ENCODE measurements at regions of chr19 and their contacts with region 1.

Region 1: DNA sequence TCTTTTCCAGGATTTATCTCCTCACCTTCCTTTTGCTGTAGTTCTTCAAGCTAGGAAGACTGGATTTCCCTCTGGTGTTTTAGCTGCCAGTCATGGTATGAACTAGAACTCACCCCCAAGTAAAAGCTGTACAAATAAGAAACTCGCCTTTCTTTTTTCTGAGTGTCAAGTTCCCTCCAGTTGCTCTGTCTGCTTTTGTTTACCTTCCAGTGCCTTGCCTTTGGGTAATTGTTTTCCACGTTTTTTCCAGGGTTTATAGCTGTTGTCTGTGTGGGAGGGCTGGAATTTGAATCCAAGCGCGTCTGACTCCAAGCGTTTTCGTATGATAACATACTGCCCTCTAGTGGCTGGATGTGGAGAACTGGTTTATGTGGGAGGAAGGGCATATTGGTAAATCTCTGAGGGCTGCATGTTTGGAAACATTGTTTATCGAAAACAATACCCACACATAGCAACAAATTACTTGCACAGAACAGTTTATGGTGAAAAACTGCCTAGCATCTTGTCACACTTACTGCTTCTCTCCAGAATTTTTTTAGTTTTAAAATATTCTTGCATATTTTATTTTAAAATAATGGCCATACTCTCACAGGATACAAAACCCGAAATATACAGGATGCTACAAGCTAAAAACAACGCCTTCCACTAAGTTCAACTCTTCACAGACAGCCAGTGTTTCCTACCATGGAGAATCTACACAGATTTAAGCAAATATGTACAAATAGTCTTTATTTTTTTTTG is 19.2 kb downstream of the RCN3 start:
- DNase-seq: peak; percentile 41 to 76 (median 73)
- H3K4me3 ChIP-seq: peak overlapping the region; percentile 45
- H3K4me3 Mint-ChIP-seq: peak overlapping the region in 6 of 7 donors; percentile 5 to 84 (median 73)
- H3K27ac ChIP-seq: no peak overlapping the region
- H3K27ac Mint-ChIP-seq: peak overlapping the region in 7 of 8 donors; percentile 15 to 85 (median 77)
- H3K4me1 ChIP-seq: peaks cover 52% of the 10 kb centered on the region
- H3K4me1 Mint-ChIP-seq: peaks cover 21 to 30% (median 28%) of the 10 kb centered on the region in 3 donors
- H3K27me3 ChIP-seq: no peaks in the 10 kb centered on the region
- H3K27me3 Mint-ChIP-seq: peaks cover 0 to 1% of the 10 kb centered on the region in 2 donors

Region 2: GRCh38 chr19:49473868-49474544 is 73.0 kb before region 1 on chr19 and contains the start of gene FLT3LG:
- CTCF ChIA-PET with region 1: interaction called, 17 read pairs
- POLR2A ChIA-PET with region 1: interaction called, 3 read pairs
- DNase-seq: peak; percentile 84 to 98 (median 92)
- H3K4me3 ChIP-seq: peak within 1 kb of the TSS; percentile 75
- H3K4me3 Mint-ChIP-seq: peak within 1 kb of the TSS; percentile 90 to 98 (median 95)
- H3K27ac ChIP-seq: peak within 1 kb of the TSS; percentile 74
- H3K27ac Mint-ChIP-seq: peak within 1 kb of the TSS; percentile 95 to 100 (median 98)
- H3K4me1 ChIP-seq: peaks cover 61% of the 10 kb centered on the region
- H3K4me1 Mint-ChIP-seq: peaks cover 44 to 65% (median 48%) of the 10 kb centered on the region in 3 donors
- H3K27me3 ChIP-seq: no peaks in the 10 kb centered on the region
- H3K27me3 Mint-ChIP-seq: peaks cover 0 to 4% of the 10 kb centered on the region in 2 donors
- total RNA-seq, gene FLT3LG: 63.9 to 71.5 TPM

Region 3: DNA sequence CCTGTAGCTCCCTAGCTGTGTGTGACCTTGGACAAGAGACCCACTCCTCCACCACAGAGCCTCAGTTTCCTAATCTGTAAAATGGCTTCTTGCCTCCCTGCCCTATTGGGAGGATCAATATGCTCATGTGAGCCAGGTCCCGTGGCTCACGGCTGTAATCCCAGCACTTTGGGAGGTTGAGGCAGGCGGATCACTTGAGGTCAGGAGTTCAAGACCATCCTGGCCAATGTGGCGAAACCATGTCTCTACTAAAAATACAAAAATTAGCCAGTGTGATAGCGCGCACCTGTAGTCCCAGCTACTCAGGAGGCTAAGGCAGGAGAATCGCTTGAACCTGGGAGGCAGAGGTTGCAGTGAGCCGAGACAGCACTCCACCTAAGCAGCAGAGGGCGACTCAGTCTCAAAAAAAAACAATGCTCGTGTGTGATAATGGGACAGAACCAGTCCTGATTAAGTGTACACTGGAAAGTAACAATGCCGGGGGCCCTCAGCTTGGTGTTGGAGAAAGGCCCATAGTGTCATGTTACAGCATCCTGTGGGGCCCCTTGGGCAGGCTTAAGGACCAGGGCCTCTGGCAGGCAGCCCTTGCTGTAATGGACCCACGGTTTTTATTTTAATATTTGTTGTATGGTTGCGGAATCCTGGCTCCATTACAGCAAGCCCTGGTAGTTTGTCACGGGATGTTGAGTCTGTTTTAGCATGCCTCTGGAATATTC is 44.0 kb before region 1 on chr19:
- CTCF ChIA-PET with region 1: interaction called, 138 read pairs
- POLR2A ChIA-PET with region 1: interaction called, 5 read pairs
- DNase-seq: peak in 3 of 5 donors; percentile 21 to 59 (median 59)
- H3K4me3 ChIP-seq: no peak overlapping the region
- H3K4me3 Mint-ChIP-seq: peak overlapping the region in 6 of 7 donors; percentile 5 to 45 (median 24)
- H3K27ac ChIP-seq: no peak overlapping the region
- H3K27ac Mint-ChIP-seq: peak overlapping the region; percentile 88 to 99 (median 96)
- H3K4me1 ChIP-seq: peaks cover 44% of the 10 kb centered on the region
- H3K4me1 Mint-ChIP-seq: peaks cover 38 to 48% (median 44%) of the 10 kb centered on the region in 3 donors
- H3K27me3 ChIP-seq: no peaks in the 10 kb centered on the region
- H3K27me3 Mint-ChIP-seq: peaks cover 0 to 10% of the 10 kb centered on the region in 2 donors

Region 4: GRCh38 chr19:49512970-49513745 is 33.8 kb before region 1 on chr19:
- CTCF ChIA-PET with region 1: interaction called, 138 read pairs
- POLR2A ChIA-PET with region 1: no interaction called
- DNase-seq: peak in 1 of 5 donors; percentile 31
- H3K4me3 ChIP-seq: peak overlapping the region; percentile 51
- H3K4me3 Mint-ChIP-seq: peak overlapping the region; percentile 80 to 93 (median 84)
- H3K27ac ChIP-seq: no peak overlapping the region
- H3K27ac Mint-ChIP-seq: peak overlapping the region in 6 of 8 donors; percentile 67 to 98 (median 87)
- H3K4me1 ChIP-seq: peaks cover 35% of the 10 kb centered on the region
- H3K4me1 Mint-ChIP-seq: peaks cover 18 to 41% (median 21%) of the 10 kb centered on the region in 3 donors
- H3K27me3 ChIP-seq: no peaks in the 10 kb centered on the region
- H3K27me3 Mint-ChIP-seq: peaks cover 0 to 2% of the 10 kb centered on the region in 2 donors

Region 5: GRCh38 chr19:49533551-49534488 is 13.2 kb before region 1 on chr19:
- CTCF ChIA-PET with region 1: interaction called, 47 read pairs
- POLR2A ChIA-PET with region 1: interaction called, 6 read pairs
- DNase-seq: peak; percentile 83 to 88 (median 84)
- H3K4me3 ChIP-seq: peak overlapping the region; percentile 64
- H3K4me3 Mint-ChIP-seq: peak overlapping the region; percentile 78 to 94 (median 87)
- H3K27ac ChIP-seq: no peak overlapping the region
- H3K27ac Mint-ChIP-seq: peak overlapping the region; percentile 59 to 91 (median 88)
- H3K4me1 ChIP-seq: peaks cover 22% of the 10 kb centered on the region
- H3K4me1 Mint-ChIP-seq: peaks cover 18 to 26% (median 20%) of the 10 kb centered on the region in 3 donors
- H3K27me3 ChIP-seq: no peaks in the 10 kb centered on the region
- H3K27me3 Mint-ChIP-seq: peaks cover 0 to 4% of the 10 kb centered on the region in 2 donors

Region 6: GRCh38 chr19:49580264-49581006 is 33.4 kb after region 1 on chr19 and contains the start of gene NOSIP:
- CTCF ChIA-PET with region 1: interaction called, 16 read pairs
- POLR2A ChIA-PET with region 1: interaction called, 4 read pairs
- DNase-seq: peak; percentile 92 to 97 (median 93)
- H3K4me3 ChIP-seq: peak within 1 kb of the TSS; percentile 93
- H3K4me3 Mint-ChIP-seq: peak within 1 kb of the TSS; percentile 90 to 95 (median 94)
- H3K27ac ChIP-seq: peak within 1 kb of the TSS; percentile 78
- H3K27ac Mint-ChIP-seq: peak within 1 kb of the TSS; percentile 65 to 98 (median 92)
- H3K4me1 ChIP-seq: peaks cover 24% of the 10 kb centered on the region
- H3K4me1 Mint-ChIP-seq: peaks cover 27 to 39% (median 35%) of the 10 kb centered on the region in 3 donors
- H3K27me3 ChIP-seq: no peaks in the 10 kb centered on the region
- H3K27me3 Mint-ChIP-seq: no peaks in the 10 kb centered on the region
- total RNA-seq, gene NOSIP: 62.5 to 64.3 TPM

Region 7: DNA sequence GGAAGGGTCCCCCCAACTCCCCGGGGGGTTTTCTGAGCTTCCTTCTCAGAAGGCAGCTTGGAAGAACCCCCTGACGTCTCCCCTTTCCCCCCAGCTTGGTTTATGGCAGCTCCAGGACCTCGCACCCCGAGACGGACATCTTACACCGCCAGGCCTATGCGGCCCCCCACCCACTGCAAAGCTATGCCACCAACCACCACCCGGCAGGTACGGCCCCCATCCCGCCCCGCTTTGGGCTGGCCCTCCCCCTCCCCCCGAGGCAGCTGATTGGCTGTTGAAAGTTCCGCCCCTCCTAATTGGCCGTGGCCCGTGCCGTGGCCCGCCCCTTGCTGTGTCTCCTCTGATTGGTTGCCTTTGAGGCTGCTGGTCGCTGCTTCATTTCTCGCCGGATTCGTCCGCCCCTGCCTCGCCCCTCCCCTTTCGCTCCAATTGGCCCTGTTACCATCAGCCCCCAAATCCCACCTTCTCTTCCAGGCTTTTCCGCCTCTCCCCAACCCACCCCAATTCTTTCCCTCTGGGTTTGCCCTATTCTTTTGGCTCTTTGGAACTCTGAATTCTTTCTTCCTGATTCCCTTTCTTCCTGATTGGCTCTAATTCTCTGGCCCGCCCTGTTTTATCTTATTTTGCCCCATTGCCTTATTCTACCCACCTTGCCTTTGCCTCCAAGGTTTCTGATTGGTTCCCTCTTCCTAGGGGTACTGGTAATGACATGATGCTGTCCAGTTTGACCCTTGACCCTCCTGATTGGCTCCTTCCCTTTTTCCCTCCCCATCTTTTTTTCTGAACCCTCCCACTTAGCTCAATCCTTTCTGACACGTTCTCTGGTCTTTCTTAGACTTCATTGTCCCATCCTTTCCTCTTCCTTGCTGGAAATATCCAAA is 46.5 kb after region 1 on chr19:
- CTCF ChIA-PET with region 1: no interaction called
- POLR2A ChIA-PET with region 1: no interaction called
- DNase-seq: peak; percentile 84 to 92 (median 88)
- H3K4me3 ChIP-seq: peak overlapping the region; percentile 87
- H3K4me3 Mint-ChIP-seq: peak overlapping the region; percentile 85 to 96 (median 91)
- H3K27ac ChIP-seq: peak overlapping the region; percentile 70
- H3K27ac Mint-ChIP-seq: peak overlapping the region; percentile 85 to 97 (median 94)
- H3K4me1 ChIP-seq: peaks cover 26% of the 10 kb centered on the region
- H3K4me1 Mint-ChIP-seq: peaks cover 32 to 47% (median 34%) of the 10 kb centered on the region in 3 donors
- H3K27me3 ChIP-seq: no peaks in the 10 kb centered on the region
- H3K27me3 Mint-ChIP-seq: peaks cover 0 to 5% of the 10 kb centered on the region in 2 donors

Region 8: GRCh38 chr19:49624967-49625910 is 78.2 kb after region 1 on chr19:
- CTCF ChIA-PET with region 1: no interaction called
- POLR2A ChIA-PET with region 1: no interaction called
- DNase-seq: no peak
- H3K4me3 ChIP-seq: no peak overlapping the region
- H3K4me3 Mint-ChIP-seq: no peak overlapping the region
- H3K27ac ChIP-seq: no peak overlapping the region
- H3K27ac Mint-ChIP-seq: peak overlapping the region in 2 of 8 donors; percentile 26 to 68
- H3K4me1 ChIP-seq: no peaks in the 10 kb centered on the region
- H3K4me1 Mint-ChIP-seq: no peaks in the 10 kb centered on the region
- H3K27me3 ChIP-seq: no peaks in the 10 kb centered on the region
- H3K27me3 Mint-ChIP-seq: no peaks in the 10 kb centered on the region

Region 9: DNA sequence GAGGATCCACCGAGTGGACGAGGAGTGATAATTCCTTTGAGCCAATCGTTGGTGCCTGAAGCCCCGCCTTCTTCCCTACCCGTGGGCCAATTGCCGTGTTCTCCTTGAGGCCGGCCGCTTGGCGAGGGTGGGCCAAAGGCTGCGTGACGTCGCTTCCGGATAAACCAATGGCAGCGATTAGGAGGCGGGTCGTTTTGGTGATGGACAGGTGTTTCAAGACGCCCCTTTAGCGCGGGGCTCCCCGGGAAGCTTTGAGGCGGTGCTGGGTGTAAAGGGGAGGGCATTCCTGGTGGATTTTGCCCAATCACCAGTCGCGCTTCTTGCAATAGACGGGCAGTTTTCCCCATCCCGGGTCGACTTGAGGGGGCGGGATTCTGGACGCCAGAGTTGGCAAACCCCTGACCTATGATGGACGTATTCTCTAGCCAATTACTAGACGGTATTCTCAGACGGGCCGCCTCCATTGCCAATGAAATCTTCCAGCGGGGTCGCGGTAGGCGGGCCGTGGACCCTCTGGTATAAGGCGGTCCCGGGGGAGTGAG is 129.8 kb after region 1 on chr19:
- CTCF ChIA-PET with region 1: interaction called, 14 read pairs
- POLR2A ChIA-PET with region 1: interaction called, 3 read pairs
- DNase-seq: peak; percentile 97 to 99 (median 98)
- H3K4me3 ChIP-seq: peak overlapping the region; percentile 88
- H3K4me3 Mint-ChIP-seq: peak overlapping the region; percentile 90 to 100 (median 99)
- H3K27ac ChIP-seq: peak overlapping the region; percentile 95
- H3K27ac Mint-ChIP-seq: peak overlapping the region; percentile 92 to 100 (median 99)
- H3K4me1 ChIP-seq: peaks cover 37% of the 10 kb centered on the region
- H3K4me1 Mint-ChIP-seq: peaks cover 34 to 56% (median 38%) of the 10 kb centered on the region in 3 donors
- H3K27me3 ChIP-seq: no peaks in the 10 kb centered on the region
- H3K27me3 Mint-ChIP-seq: peaks cover 0 to 2% of the 10 kb centered on the region in 2 donors